Activated CD8-positive, alpha-beta T cell treated with anti-CD3 and anti-CD28 coated beads, Interleukin-2, amount 10 ng/mL, durations not matched to agents 7 days and 5 days (primary cell): ENCODE measurements at regions of chr12 and their contacts with region 1.

Region 1: GRCh38 chr12:69900720-69901131 is 75.7 kb downstream of the MYRFL start:
- DNase-seq: peak; percentile 78
- ATAC-seq: no peak
- H3K4me3 Mint-ChIP-seq: no peak overlapping the region
- H3K27ac Mint-ChIP-seq: no peak overlapping the region
- H3K4me1 Mint-ChIP-seq: peaks cover 2% of the 10 kb centered on the region
- H3K27me3 Mint-ChIP-seq: no peaks in the 10 kb centered on the region

Region 2: DNA sequence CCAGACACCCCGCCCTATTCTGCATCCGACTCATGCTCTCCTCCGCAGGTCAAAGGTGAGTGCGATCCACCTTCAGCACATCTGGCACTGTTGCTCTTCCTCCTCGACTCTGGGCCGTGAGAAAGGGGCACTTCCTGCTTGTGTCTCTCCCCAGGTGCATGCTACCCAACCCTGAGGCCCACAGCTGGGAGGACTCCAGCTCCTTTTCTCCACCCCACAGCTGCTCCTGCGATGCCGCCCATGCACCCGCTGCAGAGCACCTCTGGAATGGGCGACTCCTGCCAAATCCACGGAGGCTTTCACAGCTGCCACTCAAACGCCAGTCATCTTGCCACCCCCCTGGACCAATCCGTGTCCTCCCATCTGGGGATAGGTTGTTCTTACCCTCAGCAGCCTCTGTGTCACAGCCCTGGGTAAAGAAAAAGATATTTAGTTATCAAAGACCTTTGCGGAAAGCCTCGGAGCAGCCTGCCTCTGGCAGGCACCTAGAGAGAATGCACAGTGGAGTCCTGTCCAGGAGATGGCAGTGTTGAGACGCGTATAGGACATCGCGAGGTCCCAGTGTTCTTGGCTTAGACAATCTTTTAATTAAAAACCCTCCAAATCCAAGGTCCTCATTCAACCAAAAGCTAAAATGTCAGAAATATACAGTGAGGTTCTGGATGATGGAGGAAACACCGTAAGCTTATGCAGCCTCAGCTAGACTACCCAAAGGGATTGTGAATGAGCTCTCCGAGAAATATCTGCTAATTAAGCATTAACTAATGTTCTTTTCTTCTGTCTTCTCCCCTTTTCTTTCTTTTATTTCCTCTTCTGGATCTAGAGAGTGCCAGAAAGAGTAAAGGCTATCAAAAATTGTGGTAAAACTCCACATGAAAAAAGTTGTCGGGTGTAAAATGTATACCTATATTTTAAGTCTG is 21.4 kb before region 1 on chr12:
- CTCF ChIA-PET with region 1: interaction called, 17 read pairs
- POLR2A ChIA-PET with region 1: no interaction called
- DNase-seq: peak; percentile 75
- ATAC-seq: peak; percentile 96
- H3K4me3 Mint-ChIP-seq: no peak overlapping the region
- H3K27ac Mint-ChIP-seq: no peak overlapping the region
- H3K4me1 Mint-ChIP-seq: peaks cover 5% of the 10 kb centered on the region
- H3K27me3 Mint-ChIP-seq: peaks cover 6% of the 10 kb centered on the region

Region 3: GRCh38 chr12:69885658-69886057 is 15.1 kb before region 1 on chr12:
- CTCF ChIA-PET with region 1: interaction called, 17 read pairs
- POLR2A ChIA-PET with region 1: no interaction called
- DNase-seq: no peak
- ATAC-seq: no peak
- H3K4me3 Mint-ChIP-seq: no peak overlapping the region
- H3K27ac Mint-ChIP-seq: no peak overlapping the region
- H3K4me1 Mint-ChIP-seq: no peaks in the 10 kb centered on the region
- H3K27me3 Mint-ChIP-seq: peaks cover 5% of the 10 kb centered on the region

Region 4: DNA sequence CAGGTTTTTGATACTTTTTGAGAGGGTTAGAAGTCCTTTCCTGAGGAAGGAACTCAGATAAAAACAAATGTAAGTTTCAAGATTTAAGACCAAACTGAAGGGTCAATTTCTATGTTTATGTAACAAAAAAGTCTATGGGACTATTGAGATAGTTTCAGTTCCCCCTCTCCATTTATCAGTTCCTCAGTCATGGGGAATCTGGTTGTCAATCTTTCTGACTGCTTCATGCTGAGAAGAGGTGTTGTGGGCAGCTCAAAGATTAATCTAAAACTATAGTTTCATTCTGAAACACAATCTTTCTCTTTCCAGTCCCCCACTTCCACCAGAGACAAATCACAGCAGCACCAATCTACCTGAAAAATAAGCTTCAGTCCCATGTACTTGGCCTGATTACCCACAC is 559.1 kb after region 1 on chr12:
- CTCF ChIA-PET with region 1: no interaction called
- POLR2A ChIA-PET with region 1: no interaction called
- DNase-seq: no peak
- ATAC-seq: no peak
- H3K4me3 Mint-ChIP-seq: no peak overlapping the region
- H3K27ac Mint-ChIP-seq: no peak overlapping the region
- H3K4me1 Mint-ChIP-seq: no peaks in the 10 kb centered on the region
- H3K27me3 Mint-ChIP-seq: no peaks in the 10 kb centered on the region

Region 5: GRCh38 chr12:70576346-70577282 is 675.9 kb after region 1 on chr12:
- CTCF ChIA-PET with region 1: interaction called, 24 read pairs
- POLR2A ChIA-PET with region 1: no interaction called
- DNase-seq: no peak
- ATAC-seq: no peak
- H3K4me3 Mint-ChIP-seq: no peak overlapping the region
- H3K27ac Mint-ChIP-seq: no peak overlapping the region
- H3K4me1 Mint-ChIP-seq: no peaks in the 10 kb centered on the region
- H3K27me3 Mint-ChIP-seq: no peaks in the 10 kb centered on the region